B cell (primary cell): ENCODE measurements at regions of chr9 and their contacts with region 1.

Region 1: DNA sequence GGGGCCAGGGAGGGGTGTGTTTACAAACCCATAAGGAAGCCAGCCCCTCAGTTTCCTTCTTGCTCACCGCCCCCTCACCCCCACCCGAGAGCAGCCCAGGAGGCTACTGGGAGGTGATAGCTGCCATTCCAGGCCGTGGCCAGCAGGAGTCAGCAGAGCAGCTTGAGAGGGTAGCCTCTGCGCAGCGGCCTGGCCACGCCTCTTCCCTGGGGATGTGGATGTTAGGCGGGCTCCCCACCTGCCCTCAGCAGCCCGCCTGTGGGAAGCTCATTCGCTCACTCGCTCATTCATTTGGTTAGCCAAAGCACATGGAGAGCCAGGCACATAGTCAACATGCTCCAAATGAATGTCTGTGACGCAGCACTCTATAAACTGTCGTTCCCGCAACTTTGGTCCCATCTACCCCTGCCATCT is 6.1 kb upstream of the DPM2 start:
- DNase-seq: peak; percentile 86
- ATAC-seq: peak; percentile 88
- H3K4me3 ChIP-seq: no peak overlapping the region
- H3K4me3 Mint-ChIP-seq: no peak overlapping the region
- H3K27ac ChIP-seq: peak overlapping the region; percentile 12 to 54
- H3K27ac Mint-ChIP-seq: peak overlapping the region; percentile 76
- H3K4me1 ChIP-seq: peaks cover 17 to 18% of the 10 kb centered on the region in 2 donors
- H3K4me1 Mint-ChIP-seq: peaks cover 27% of the 10 kb centered on the region
- H3K27me3 ChIP-seq: no peaks in the 10 kb centered on the region
- H3K27me3 Mint-ChIP-seq: no peaks in the 10 kb centered on the region
- CTCF ChIP-seq: peak; percentile 85

Region 2: GRCh38 chr9:127960410-127961154 is 16.8 kb after region 1 on chr9:
- CTCF ChIA-PET with region 1: interaction called, 85 read pairs
- POLR2A ChIA-PET with region 1: no interaction called
- intact Hi-C with region 1: no loop called
- DNase-seq: no peak
- ATAC-seq: no peak
- H3K4me3 ChIP-seq: no peak overlapping the region
- H3K4me3 Mint-ChIP-seq: no peak overlapping the region
- H3K27ac ChIP-seq: peak overlapping the region in 1 of 2 donors; percentile 60
- H3K27ac Mint-ChIP-seq: peak overlapping the region; percentile 69
- H3K4me1 ChIP-seq: peaks cover 24 to 51% of the 10 kb centered on the region in 2 donors
- H3K4me1 Mint-ChIP-seq: peaks cover 76% of the 10 kb centered on the region
- H3K27me3 ChIP-seq: no peaks in the 10 kb centered on the region
- H3K27me3 Mint-ChIP-seq: no peaks in the 10 kb centered on the region
- CTCF ChIP-seq: no peak

Region 3: GRCh38 chr9:128015696-128016095 is 72.0 kb after region 1 on chr9:
- CTCF ChIA-PET with region 1: interaction called, 20 read pairs
- POLR2A ChIA-PET with region 1: no interaction called
- intact Hi-C with region 1: no loop called
- DNase-seq: no peak
- ATAC-seq: no peak
- H3K4me3 ChIP-seq: no peak overlapping the region
- H3K4me3 Mint-ChIP-seq: no peak overlapping the region
- H3K27ac ChIP-seq: no peak overlapping the region
- H3K27ac Mint-ChIP-seq: no peak overlapping the region
- H3K4me1 ChIP-seq: peaks cover 11 to 18% of the 10 kb centered on the region in 2 donors
- H3K4me1 Mint-ChIP-seq: peaks cover 18% of the 10 kb centered on the region
- H3K27me3 ChIP-seq: no peaks in the 10 kb centered on the region
- H3K27me3 Mint-ChIP-seq: no peaks in the 10 kb centered on the region
- CTCF ChIP-seq: no peak

Region 4: GRCh38 chr9:128034821-128035764 is 91.4 kb after region 1 on chr9:
- CTCF ChIA-PET with region 1: interaction called, 310 read pairs
- POLR2A ChIA-PET with region 1: interaction called, 15 read pairs
- intact Hi-C with region 1: loop called (anchors 1 kb)
- DNase-seq: peak; percentile 88
- ATAC-seq: peak; percentile 82
- H3K4me3 ChIP-seq: no peak overlapping the region
- H3K4me3 Mint-ChIP-seq: no peak overlapping the region
- H3K27ac ChIP-seq: no peak overlapping the region
- H3K27ac Mint-ChIP-seq: peak overlapping the region; percentile 71
- H3K4me1 ChIP-seq: peaks cover 29 to 46% of the 10 kb centered on the region in 2 donors
- H3K4me1 Mint-ChIP-seq: peaks cover 33% of the 10 kb centered on the region
- H3K27me3 ChIP-seq: no peaks in the 10 kb centered on the region
- H3K27me3 Mint-ChIP-seq: no peaks in the 10 kb centered on the region
- CTCF ChIP-seq: peak; percentile 93

Region 5: GRCh38 chr9:128094166-128094967 is 150.6 kb after region 1 on chr9:
- CTCF ChIA-PET with region 1: interaction called, 22 read pairs
- POLR2A ChIA-PET with region 1: no interaction called
- intact Hi-C with region 1: no loop called
- DNase-seq: peak; percentile 92
- ATAC-seq: peak; percentile 93
- H3K4me3 ChIP-seq: peak overlapping the region in 1 of 5 experiments; percentile 6
- H3K4me3 Mint-ChIP-seq: peak overlapping the region; percentile 83
- H3K27ac ChIP-seq: peak overlapping the region; percentile 75 to 94
- H3K27ac Mint-ChIP-seq: peak overlapping the region; percentile 98
- H3K4me1 ChIP-seq: peaks cover 31 to 43% of the 10 kb centered on the region in 2 donors
- H3K4me1 Mint-ChIP-seq: peaks cover 43% of the 10 kb centered on the region
- H3K27me3 ChIP-seq: no peaks in the 10 kb centered on the region
- H3K27me3 Mint-ChIP-seq: no peaks in the 10 kb centered on the region
- CTCF ChIP-seq: no peak